Vagina (tissue), 2 donors: ENCODE measurements at regions of chr15 and their contacts with region 1.

Region 1: GRCh38 chr15:85624291-85624801 is 170.4 kb downstream of the KLHL25 start:
- DNase-seq: no peak
- H3K4me3 ChIP-seq: peak overlapping the region; percentile 14 to 56
- H3K27ac ChIP-seq: peak overlapping the region; percentile 52
- H3K4me1 ChIP-seq: peaks cover 88% of the 10 kb centered on the region
- H3K27me3 ChIP-seq: no peaks in the 10 kb centered on the region
- CTCF ChIP-seq: no peak
- POLR2A ChIP-seq: no peak

Region 2: GRCh38 chr15:85723960-85724945 is 99.9 kb after region 1 on chr15:
- intact Hi-C with region 1: loop called (anchors 5 kb)
- DNase-seq: no peak
- H3K4me3 ChIP-seq: no peak overlapping the region
- H3K27ac ChIP-seq: peak overlapping the region; percentile 77
- H3K4me1 ChIP-seq: peaks cover 46% of the 10 kb centered on the region
- H3K27me3 ChIP-seq: no peaks in the 10 kb centered on the region
- CTCF ChIP-seq: no peak
- POLR2A ChIP-seq: no peak